Activated CD4-positive, alpha-beta memory T cell treated with anti-CD3 and anti-CD28 coated beads for 36 hours (primary cell): ENCODE measurements at regions of chr22 and their contacts with region 1.

Region 1: GRCh38 chr22:46006379-46007002 is 29.5 kb upstream of the WNT7B start:
- DNase-seq: peak; percentile 90
- H3K4me3 Mint-ChIP-seq: no peak overlapping the region
- H3K27ac Mint-ChIP-seq: no peak overlapping the region
- H3K4me1 Mint-ChIP-seq: peaks cover 6% of the 10 kb centered on the region
- H3K27me3 Mint-ChIP-seq: no peaks in the 10 kb centered on the region

Region 2: DNA sequence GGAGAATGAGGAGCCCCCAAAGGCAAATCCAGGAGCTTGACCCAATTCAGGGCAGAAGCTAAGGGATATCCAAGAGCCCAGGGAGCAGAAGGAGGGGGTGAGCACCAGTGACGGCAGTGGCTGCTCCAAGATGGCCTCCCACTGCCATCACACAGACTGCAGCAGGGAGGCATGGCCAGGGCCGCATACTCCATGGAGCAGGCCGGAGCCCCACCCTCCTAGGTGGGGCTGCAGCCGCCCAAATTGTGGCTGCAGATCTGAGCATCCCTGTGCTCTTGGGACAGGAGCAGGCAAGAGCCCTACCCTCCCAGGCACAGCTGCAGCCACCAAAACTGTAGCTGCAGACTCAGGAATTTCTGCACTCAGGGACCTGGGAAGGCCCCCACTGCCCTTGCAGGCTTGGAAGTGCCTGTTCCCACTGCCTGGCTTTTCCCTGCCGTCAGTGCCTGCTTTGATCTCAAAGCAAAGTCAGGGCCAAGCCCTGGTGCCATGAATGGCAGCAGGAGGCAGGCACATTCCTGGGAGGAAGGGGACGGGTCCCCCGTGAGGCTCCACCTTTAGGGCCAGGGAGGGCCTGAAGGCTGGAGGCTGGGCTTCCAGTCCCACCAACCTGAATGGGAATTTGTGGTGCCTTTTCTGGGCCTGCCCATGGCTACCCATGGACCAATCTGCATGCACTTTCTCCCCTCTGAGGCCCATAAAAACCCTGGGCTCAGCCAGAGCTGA is 19.2 kb before region 1 on chr22:
- CTCF ChIA-PET with region 1: interaction called, 14 read pairs
- POLR2A ChIA-PET with region 1: no interaction called
- intact Hi-C with region 1: no loop called
- DNase-seq: no peak
- H3K4me3 Mint-ChIP-seq: no peak overlapping the region
- H3K27ac Mint-ChIP-seq: no peak overlapping the region
- H3K4me1 Mint-ChIP-seq: no peaks in the 10 kb centered on the region
- H3K27me3 Mint-ChIP-seq: no peaks in the 10 kb centered on the region

Region 3: GRCh38 chr22:46023558-46023981 is 17.1 kb after region 1 on chr22:
- CTCF ChIA-PET with region 1: interaction called, 30 read pairs
- POLR2A ChIA-PET with region 1: no interaction called
- intact Hi-C with region 1: no loop called
- DNase-seq: no peak
- H3K4me3 Mint-ChIP-seq: no peak overlapping the region
- H3K27ac Mint-ChIP-seq: no peak overlapping the region
- H3K4me1 Mint-ChIP-seq: peaks cover 4% of the 10 kb centered on the region
- H3K27me3 Mint-ChIP-seq: peaks cover 30% of the 10 kb centered on the region

Region 4: GRCh38 chr22:46044621-46045438 is 38.3 kb after region 1 on chr22:
- CTCF ChIA-PET with region 1: interaction called, 11 read pairs
- POLR2A ChIA-PET with region 1: interaction called, 4 read pairs
- intact Hi-C with region 1: no loop called
- DNase-seq: peak; percentile 51
- H3K4me3 Mint-ChIP-seq: peak overlapping the region; percentile 82
- H3K27ac Mint-ChIP-seq: peak overlapping the region; percentile 79
- H3K4me1 Mint-ChIP-seq: peaks cover 14% of the 10 kb centered on the region
- H3K27me3 Mint-ChIP-seq: no peaks in the 10 kb centered on the region

Region 5: DNA sequence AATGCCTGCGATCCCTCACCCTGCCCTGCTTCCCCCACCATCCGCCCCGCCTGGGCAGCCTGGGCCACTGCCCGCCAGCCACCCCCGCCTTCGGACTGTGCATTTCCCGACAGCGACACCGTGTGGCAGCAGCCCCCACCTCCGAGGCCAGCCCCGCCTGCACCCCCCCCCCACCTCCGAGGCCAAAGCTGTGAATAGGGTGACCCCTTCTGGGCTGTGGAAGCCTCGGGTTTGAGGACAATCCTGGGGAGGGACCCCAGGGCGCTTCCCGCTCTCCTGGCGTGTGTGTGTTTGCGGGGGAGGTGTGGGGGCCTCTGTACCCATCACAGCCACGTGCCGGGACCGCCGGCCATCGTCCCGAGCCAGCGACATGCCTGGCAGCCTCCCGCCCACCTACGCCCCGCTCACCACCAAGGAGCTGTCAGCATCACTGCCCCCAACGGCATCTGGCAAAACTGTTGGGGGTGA is 110.0 kb after region 1 on chr22:
- CTCF ChIA-PET with region 1: interaction called, 257 read pairs
- POLR2A ChIA-PET with region 1: interaction called, 4 read pairs
- intact Hi-C with region 1: loop called (anchors 1 kb)
- DNase-seq: peak; percentile 91
- H3K4me3 Mint-ChIP-seq: no peak overlapping the region
- H3K27ac Mint-ChIP-seq: no peak overlapping the region
- H3K4me1 Mint-ChIP-seq: peaks cover 2% of the 10 kb centered on the region
- H3K27me3 Mint-ChIP-seq: no peaks in the 10 kb centered on the region